ENCODE measurements at regions of chr11 and their contacts with region 1.

Region 1: GRCh38 chr11:78564490-78565467 is 9.9 kb downstream of the NARS2 start:
- DNase-seq: peak; percentile 28 to 67
- ATAC-seq: peak; percentile 59 to 76; a peak in 3 of 6 replicates
- H3K4me3 ChIP-seq: no peak overlapping the region
- H3K27ac ChIP-seq: peak overlapping the region in 1 of 2 experiments; percentile 34; a peak in 1 of 6 replicates
- H3K4me1 ChIP-seq: peaks cover 36% of the 10 kb centered on the region
- CTCF ChIP-seq: peak; percentile 90
- EP300 ChIP-seq: no peak
- POLR2A ChIP-seq: no peak
- RAD21 ChIP-seq: peak; percentile 82 to 85

Region 2: GRCh38 chr11:78149646-78150045 is 415.1 kb before region 1 on chr11:
- CTCF ChIA-PET with region 1: interaction called, 16 read pairs
- POLR2A ChIA-PET with region 1: no interaction called
- DNase-seq: peak; percentile 18 to 52
- ATAC-seq: peak; percentile 81 to 87
- H3K4me3 ChIP-seq: no peak overlapping the region
- H3K27ac ChIP-seq: no peak overlapping the region
- H3K4me1 ChIP-seq: 0 out of 3 replicates have a peak, but pooled peaks cover 6% of the 10 kb centered on the region
- CTCF ChIP-seq: peak; percentile 39
- EP300 ChIP-seq: no peak
- POLR2A ChIP-seq: no peak
- RAD21 ChIP-seq: peak; percentile 38 to 43

Region 3: GRCh38 chr11:78223320-78223954 is 341.3 kb before region 1 on chr11:
- CTCF ChIA-PET with region 1: interaction called, 39 read pairs
- POLR2A ChIA-PET with region 1: no interaction called
- DNase-seq: no peak
- ATAC-seq: no peak
- H3K4me3 ChIP-seq: no peak overlapping the region
- H3K27ac ChIP-seq: no peak overlapping the region
- H3K4me1 ChIP-seq: no peaks in the 10 kb centered on the region
- CTCF ChIP-seq: no peak
- EP300 ChIP-seq: no peak
- POLR2A ChIP-seq: no peak
- RAD21 ChIP-seq: no peak

Region 4: GRCh38 chr11:78228467-78228866 is 336.3 kb before region 1 on chr11:
- CTCF ChIA-PET with region 1: interaction called, 39 read pairs
- POLR2A ChIA-PET with region 1: no interaction called
- DNase-seq: peak; percentile 51 to 60
- ATAC-seq: peak; percentile 87 to 92
- H3K4me3 ChIP-seq: no peak overlapping the region
- H3K27ac ChIP-seq: no peak overlapping the region
- H3K4me1 ChIP-seq: no peaks in the 10 kb centered on the region
- CTCF ChIP-seq: peak; percentile 63
- EP300 ChIP-seq: no peak
- POLR2A ChIP-seq: no peak
- RAD21 ChIP-seq: peak; percentile 74 to 77

Region 5: GRCh38 chr11:78416305-78417178 is 148.2 kb before region 1 on chr11:
- CTCF ChIA-PET with region 1: interaction called, 63 read pairs
- POLR2A ChIA-PET with region 1: interaction called, 5 read pairs
- DNase-seq: peak; percentile 81 to 88
- ATAC-seq: peak; percentile 67 to 83
- H3K4me3 ChIP-seq: peak overlapping the region; percentile 86
- H3K27ac ChIP-seq: peak overlapping the region; percentile 79 to 95
- H3K4me1 ChIP-seq: peaks cover 32% of the 10 kb centered on the region
- CTCF ChIP-seq: peak; percentile 55
- EP300 ChIP-seq: no peak
- POLR2A ChIP-seq: no peak; the same call in 1 of the 2 replicates
- RAD21 ChIP-seq: peak; percentile 26 to 41; a peak in 2 of 5 replicates

Region 6: GRCh38 chr11:78539506-78539905 is 25.3 kb before region 1 on chr11:
- CTCF ChIA-PET with region 1: interaction called, 11 read pairs
- POLR2A ChIA-PET with region 1: no interaction called
- DNase-seq: no peak
- ATAC-seq: no peak
- H3K4me3 ChIP-seq: no peak overlapping the region
- H3K27ac ChIP-seq: no peak overlapping the region
- H3K4me1 ChIP-seq: peaks cover 8% of the 10 kb centered on the region; the same call in 1 of the 3 replicates
- CTCF ChIP-seq: no peak
- EP300 ChIP-seq: no peak
- POLR2A ChIP-seq: no peak
- RAD21 ChIP-seq: no peak

Region 7: DNA sequence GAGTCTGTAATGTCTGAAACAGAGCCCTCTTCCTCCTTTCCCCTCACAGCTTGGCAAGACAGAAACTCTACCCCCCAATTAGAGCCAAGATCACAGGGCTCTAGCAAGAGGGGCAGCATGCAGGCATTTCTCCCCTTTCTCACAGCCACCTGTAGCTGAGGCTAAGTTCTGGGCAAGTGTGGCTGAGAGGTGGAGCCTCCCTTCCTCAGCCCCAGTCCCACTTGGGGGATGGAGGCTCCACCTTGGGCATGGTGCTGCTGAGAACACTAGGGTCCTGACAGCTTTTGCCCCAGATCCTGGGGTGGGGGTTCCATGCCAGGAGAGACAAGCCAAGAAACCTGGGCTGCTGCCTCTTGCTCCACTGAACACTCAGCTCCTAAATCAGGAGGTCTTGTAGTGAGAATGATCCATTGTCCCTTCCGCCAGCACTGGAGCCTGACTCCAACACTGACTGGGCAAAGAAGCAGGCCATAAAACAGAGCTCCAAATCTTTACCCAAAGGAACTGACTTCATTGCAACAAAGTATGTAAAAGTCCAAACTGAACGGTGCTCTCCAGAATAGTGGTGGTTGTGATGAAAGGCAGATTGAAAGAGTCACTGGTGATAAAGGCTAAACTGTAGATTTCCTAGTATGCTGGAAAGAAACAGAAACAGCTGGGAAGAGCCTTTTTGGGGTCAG is 15.7 kb before region 1 on chr11:
- CTCF ChIA-PET with region 1: interaction called, 24 read pairs
- POLR2A ChIA-PET with region 1: no interaction called
- DNase-seq: no peak
- ATAC-seq: no peak; a peak in 1 of 6 replicates
- H3K4me3 ChIP-seq: no peak overlapping the region
- H3K27ac ChIP-seq: no peak overlapping the region
- H3K4me1 ChIP-seq: no peaks in the 10 kb centered on the region
- CTCF ChIP-seq: no peak
- EP300 ChIP-seq: no peak
- POLR2A ChIP-seq: no peak
- RAD21 ChIP-seq: no peak

Region 8: DNA sequence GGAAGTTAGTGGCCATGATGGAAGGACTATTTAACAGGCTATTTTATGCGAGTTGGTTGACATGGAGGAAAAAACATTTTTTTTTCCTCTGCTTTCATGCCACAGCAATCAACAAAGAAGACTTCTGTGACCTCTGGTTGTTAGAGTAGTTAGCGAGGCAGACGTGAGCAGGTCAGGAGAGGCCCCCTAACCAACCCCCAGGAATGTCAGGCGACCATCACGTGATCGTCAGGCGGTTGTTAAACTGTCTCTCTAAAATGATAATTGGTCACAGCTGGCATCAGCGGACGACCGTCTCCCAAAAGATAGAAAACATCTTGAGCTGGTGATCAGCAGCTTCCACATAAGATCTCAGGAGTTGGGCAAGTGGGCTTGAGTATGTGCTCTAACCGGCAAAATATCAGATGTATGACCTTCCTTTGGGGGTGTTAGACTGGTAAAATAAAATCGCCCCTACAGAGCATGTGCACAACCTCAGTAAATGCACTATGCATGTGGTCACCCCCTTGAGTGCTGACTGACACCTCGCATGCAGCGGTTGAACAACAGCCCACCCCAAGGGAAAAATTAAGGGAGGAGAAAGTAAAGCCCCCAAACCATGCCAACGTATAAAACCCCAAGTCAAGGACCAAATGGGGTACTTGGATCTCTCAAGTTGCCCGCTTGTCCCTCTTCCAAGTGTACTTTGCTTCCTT is 30.8 kb after region 1 on chr11:
- CTCF ChIA-PET with region 1: no interaction called
- POLR2A ChIA-PET with region 1: no interaction called
- DNase-seq: no peak
- ATAC-seq: no peak
- H3K4me3 ChIP-seq: no peak overlapping the region
- H3K27ac ChIP-seq: no peak overlapping the region
- H3K4me1 ChIP-seq: no peaks in the 10 kb centered on the region
- CTCF ChIP-seq: no peak
- EP300 ChIP-seq: no peak
- POLR2A ChIP-seq: no peak
- RAD21 ChIP-seq: no peak

Region 9: DNA sequence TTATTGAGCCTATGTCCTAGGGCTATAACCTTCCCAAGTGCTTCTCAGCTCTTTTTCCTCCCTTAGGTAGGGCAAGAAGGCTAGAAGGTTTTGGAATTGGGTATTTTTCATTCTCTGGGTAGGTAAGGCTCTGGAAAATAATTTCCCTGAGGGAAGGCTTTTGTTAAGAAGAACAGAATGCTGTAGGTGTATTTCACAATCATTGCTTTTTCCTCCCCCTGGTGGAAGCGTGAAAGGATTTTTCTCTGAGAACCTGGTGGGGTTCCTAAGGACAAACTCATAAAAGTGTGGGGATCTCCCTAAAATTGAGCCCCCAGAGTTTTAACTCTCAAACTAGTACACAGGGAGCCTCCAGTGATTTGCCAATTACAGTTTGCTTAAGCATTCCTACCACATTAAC is 50.9 kb after region 1 on chr11:
- CTCF ChIA-PET with region 1: no interaction called
- POLR2A ChIA-PET with region 1: no interaction called
- DNase-seq: no peak
- ATAC-seq: no peak
- H3K4me3 ChIP-seq: no peak overlapping the region
- H3K27ac ChIP-seq: no peak overlapping the region
- H3K4me1 ChIP-seq: no peaks in the 10 kb centered on the region
- CTCF ChIP-seq: no peak
- EP300 ChIP-seq: no peak
- POLR2A ChIP-seq: no peak
- RAD21 ChIP-seq: no peak

Region 10: GRCh38 chr11:78659326-78660270 is 94.8 kb after region 1 on chr11:
- CTCF ChIA-PET with region 1: no interaction called
- POLR2A ChIA-PET with region 1: no interaction called
- DNase-seq: no peak
- ATAC-seq: no peak; a peak in 1 of 6 replicates
- H3K4me3 ChIP-seq: no peak overlapping the region
- H3K27ac ChIP-seq: no peak overlapping the region
- H3K4me1 ChIP-seq: no peaks in the 10 kb centered on the region
- CTCF ChIP-seq: no peak
- EP300 ChIP-seq: no peak
- POLR2A ChIP-seq: no peak
- RAD21 ChIP-seq: no peak